ENCODE measurements at regions of chr3 and their contacts with region 1.

Region 1: DNA sequence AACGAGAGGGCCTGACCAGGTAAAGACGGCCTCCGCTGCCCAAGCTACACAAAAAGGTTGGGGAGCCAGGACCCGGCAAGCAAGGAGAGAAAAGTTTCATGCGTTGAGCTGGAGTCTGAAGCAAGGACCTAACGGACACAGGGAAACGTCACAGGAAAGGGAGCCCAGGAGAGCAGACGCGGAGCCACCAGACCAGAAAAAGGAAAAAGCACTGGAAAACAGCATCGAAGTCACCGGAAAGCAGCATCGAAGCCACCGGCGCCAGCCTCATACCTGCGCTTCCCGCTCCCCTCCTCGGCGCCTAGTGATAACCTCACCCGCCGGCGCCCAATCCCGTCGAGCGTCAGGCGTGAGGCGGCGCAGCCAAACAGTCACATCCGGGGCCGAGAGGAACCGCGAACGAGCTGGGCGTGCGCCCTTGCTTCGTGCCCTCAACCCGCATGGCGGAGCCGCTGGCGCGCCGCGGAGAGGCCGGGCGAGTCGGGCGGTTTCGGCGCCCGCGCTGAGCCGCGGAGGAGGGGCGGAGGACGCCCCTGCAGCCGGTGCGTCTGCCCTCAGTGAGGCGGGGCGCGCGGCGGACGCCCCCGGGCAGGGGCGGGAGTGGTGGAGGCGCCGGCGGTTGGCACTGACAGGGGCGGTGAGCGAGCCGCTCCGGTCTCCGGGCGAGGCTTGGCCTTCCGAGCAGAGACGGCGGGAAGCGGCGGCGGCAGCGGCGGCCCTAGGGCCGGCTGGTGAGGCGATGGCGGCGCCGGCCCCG is at the starts of genes FBXO45 and WDR53:
- DNase-seq: peak; percentile 92
- ATAC-seq: peak; percentile 90
- H3K4me3 Mint-ChIP-seq: peak within 1 kb of the TSS; percentile 98
- H3K27ac Mint-ChIP-seq: peak within 1 kb of the TSS; percentile 97
- H3K4me1 Mint-ChIP-seq: peaks cover 29% of the 10 kb centered on the region
- H3K27me3 Mint-ChIP-seq: no peaks in the 10 kb centered on the region
- CTCF ChIP-seq: no peak
- total RNA-seq, gene FBXO45: 5.7 and 6.5 TPM in 2 replicates
- total RNA-seq, gene WDR53: 14.1 and 14.3 TPM in 2 replicates

Region 2: GRCh38 chr3:196251918-196252317 is 316.5 kb before region 1 on chr3:
- CTCF ChIA-PET with region 1: no interaction called
- POLR2A ChIA-PET with region 1: interaction called, 3 read pairs
- intact Hi-C with region 1: loop called (anchors 2 kb)
- DNase-seq: no peak
- ATAC-seq: peak; percentile 70
- H3K4me3 Mint-ChIP-seq: no peak overlapping the region
- H3K27ac Mint-ChIP-seq: no peak overlapping the region
- H3K4me1 Mint-ChIP-seq: peaks cover 8% of the 10 kb centered on the region
- H3K27me3 Mint-ChIP-seq: no peaks in the 10 kb centered on the region
- CTCF ChIP-seq: no peak

Region 3: GRCh38 chr3:196528639-196529233 is 39.7 kb before region 1 on chr3:
- CTCF ChIA-PET with region 1: interaction called, 12 read pairs
- POLR2A ChIA-PET with region 1: interaction called, 13 read pairs
- intact Hi-C with region 1: loop called (anchors 1 kb)
- DNase-seq: peak; percentile 92
- ATAC-seq: peak; percentile 97
- H3K4me3 Mint-ChIP-seq: peak overlapping the region; percentile 77
- H3K27ac Mint-ChIP-seq: peak overlapping the region; percentile 68
- H3K4me1 Mint-ChIP-seq: peaks cover 9% of the 10 kb centered on the region
- H3K27me3 Mint-ChIP-seq: no peaks in the 10 kb centered on the region
- CTCF ChIP-seq: no peak

Region 4: GRCh38 chr3:196632046-196632751 is 63.8 kb after region 1 on chr3:
- CTCF ChIA-PET with region 1: no interaction called
- POLR2A ChIA-PET with region 1: interaction called, 4 read pairs
- intact Hi-C with region 1: loop called (anchors 2 kb)
- DNase-seq: peak; percentile 77
- ATAC-seq: peak; percentile 75
- H3K4me3 Mint-ChIP-seq: peak overlapping the region; percentile 93
- H3K27ac Mint-ChIP-seq: peak overlapping the region; percentile 96
- H3K4me1 Mint-ChIP-seq: peaks cover 66% of the 10 kb centered on the region
- H3K27me3 Mint-ChIP-seq: no peaks in the 10 kb centered on the region
- CTCF ChIP-seq: no peak

Region 5: DNA sequence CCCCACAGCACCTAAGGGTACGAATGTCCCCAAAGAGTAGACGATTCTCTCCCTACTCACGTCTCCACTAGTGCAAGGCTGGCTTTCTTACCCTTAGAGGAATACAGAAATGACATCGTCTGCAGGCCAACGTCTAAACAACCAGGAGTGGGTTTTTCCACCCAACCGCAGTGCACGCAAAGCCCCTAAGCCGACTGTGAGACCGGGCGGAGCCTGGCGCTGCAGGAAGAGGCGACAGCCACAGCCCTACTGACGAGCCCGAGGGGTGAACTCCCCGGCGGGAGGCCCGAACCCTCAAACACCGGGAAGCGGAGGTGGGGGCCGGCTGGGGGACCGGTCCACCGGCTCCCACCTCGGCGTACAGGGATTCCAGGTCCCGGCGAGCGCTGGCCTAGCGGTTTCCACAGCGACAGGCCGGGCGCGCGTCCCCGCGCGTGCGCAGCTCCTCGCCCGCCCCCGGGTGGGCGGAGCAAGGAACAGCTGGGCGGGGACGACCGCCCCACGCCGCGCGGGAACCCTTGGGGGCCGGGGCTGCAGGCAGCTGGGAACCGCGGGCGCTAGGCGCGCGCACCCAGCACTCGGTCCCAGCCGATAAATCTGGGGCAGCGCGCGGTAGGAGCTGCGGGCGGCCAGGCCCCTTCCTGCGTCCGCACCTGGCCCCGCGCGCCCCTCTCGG is 143.6 kb after region 1 on chr3 and contains the starts of genes CEP19 and PIGX:
- CTCF ChIA-PET with region 1: no interaction called
- POLR2A ChIA-PET with region 1: interaction called, 7 read pairs
- intact Hi-C with region 1: loop called (anchors 1 kb)
- DNase-seq: peak; percentile 96
- ATAC-seq: peak; percentile 80
- H3K4me3 Mint-ChIP-seq: peak within 1 kb of the TSS; percentile 91
- H3K27ac Mint-ChIP-seq: peak within 1 kb of the TSS; percentile 98
- H3K4me1 Mint-ChIP-seq: peaks cover 20% of the 10 kb centered on the region
- H3K27me3 Mint-ChIP-seq: no peaks in the 10 kb centered on the region
- CTCF ChIP-seq: no peak
- total RNA-seq, gene CEP19: 4.0 and 4.1 TPM in 2 replicates
- total RNA-seq, gene PIGX: 18.0 and 21.8 TPM in 2 replicates

Region 6: DNA sequence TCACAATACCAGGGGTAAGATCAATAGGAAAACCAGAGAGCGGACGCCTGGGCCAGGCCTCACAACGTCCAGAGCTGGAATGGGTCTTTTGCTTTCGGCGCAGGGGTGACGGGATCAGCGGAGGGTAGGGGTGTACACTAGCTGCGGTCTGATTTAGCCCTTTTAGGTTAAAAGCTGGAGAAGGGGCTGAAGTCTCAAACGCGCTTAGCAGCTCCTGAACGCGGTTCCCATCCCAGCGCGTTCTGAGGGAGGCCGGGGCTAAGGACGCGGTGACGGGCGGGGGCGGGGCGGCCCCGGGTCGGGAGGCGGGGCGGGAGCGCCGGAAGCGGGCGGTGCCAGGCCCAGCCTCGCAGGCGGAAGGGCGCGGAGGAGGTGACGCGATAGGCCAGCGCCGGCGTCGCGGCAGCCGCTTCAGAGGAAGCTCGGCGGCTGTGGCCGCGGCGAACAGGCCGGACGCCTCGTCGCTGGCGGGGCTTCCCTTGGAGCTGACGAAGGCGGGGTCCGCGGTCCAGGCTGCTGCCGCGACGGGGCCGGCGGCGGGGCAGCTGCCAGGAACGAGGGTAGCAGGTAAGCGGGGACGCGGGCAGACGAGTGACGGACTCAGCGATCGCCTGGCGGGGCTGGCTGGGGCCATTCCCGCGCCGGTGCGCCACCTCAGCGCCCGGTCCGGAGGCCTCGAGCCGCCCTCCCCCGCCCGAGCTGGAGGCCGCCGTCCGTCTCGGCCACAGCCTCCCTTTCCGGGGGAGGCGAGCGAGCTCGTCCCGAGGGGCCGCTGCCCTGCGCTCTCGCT is 299.3 kb after region 1 on chr3 and contains the start of gene SENP5:
- CTCF ChIA-PET with region 1: no interaction called
- POLR2A ChIA-PET with region 1: interaction called, 14 read pairs
- intact Hi-C with region 1: loop called (anchors 2 kb)
- DNase-seq: peak; percentile 87
- ATAC-seq: peak; percentile 97
- H3K4me3 Mint-ChIP-seq: peak within 1 kb of the TSS; percentile 93
- H3K27ac Mint-ChIP-seq: peak within 1 kb of the TSS; percentile 89
- H3K4me1 Mint-ChIP-seq: peaks cover 28% of the 10 kb centered on the region
- H3K27me3 Mint-ChIP-seq: no peaks in the 10 kb centered on the region
- CTCF ChIP-seq: no peak
- total RNA-seq, gene SENP5: 35.8 and 45.2 TPM in 2 replicates

Measured in activated B cell treated with CpG ODN at 0.5 μM for 24 hours (primary cell).